ENCODE measurements at regions of chr14 and their contacts with region 1.

Region 1: GRCh38 chr14:76647697-76648298 is 113.5 kb upstream of the VASH1 start:
- DNase-seq: peak in 1 of 2 donors; percentile 15
- ATAC-seq: peak in 1 of 2 donors; percentile 86
- H3K4me3 ChIP-seq: no peak overlapping the region
- H3K27ac ChIP-seq: no peak overlapping the region
- H3K4me1 ChIP-seq: no peaks in the 10 kb centered on the region
- H3K27me3 ChIP-seq: no peaks in the 10 kb centered on the region
- CTCF ChIP-seq: peak; percentile 46 to 78 (median 46)
- POLR2A ChIP-seq: no peak

Region 2: DNA sequence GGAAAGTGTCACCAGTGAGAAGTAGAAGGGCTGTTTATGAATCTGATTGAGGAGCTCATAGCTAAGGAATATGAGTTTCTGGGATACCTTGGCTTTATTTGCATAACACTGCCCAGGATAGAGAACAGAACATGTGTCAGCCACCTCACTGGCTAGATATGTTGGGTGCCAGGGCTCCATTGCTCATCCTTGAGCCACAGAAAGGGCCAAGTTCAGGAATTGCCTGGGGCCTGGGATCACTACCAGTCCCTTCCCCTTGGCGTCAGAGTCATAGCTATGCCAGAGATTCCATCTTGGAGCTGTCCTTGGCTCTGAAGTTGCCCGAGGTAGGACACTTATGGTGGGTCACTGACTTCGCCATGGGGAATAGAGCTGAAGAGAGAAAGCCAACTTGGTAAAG is 613.2 kb before region 1 on chr14:
- in situ Hi-C with region 1: loop called in 2 of 4 experiments (anchors 25 kb)
- intact Hi-C with region 1: no loop called
- DNase-seq: no peak
- ATAC-seq: no peak
- H3K4me3 ChIP-seq: no peak overlapping the region
- H3K27ac ChIP-seq: no peak overlapping the region
- H3K4me1 ChIP-seq: no peaks in the 10 kb centered on the region
- H3K27me3 ChIP-seq: no peaks in the 10 kb centered on the region
- CTCF ChIP-seq: no peak
- POLR2A ChIP-seq: no peak

Region 3: DNA sequence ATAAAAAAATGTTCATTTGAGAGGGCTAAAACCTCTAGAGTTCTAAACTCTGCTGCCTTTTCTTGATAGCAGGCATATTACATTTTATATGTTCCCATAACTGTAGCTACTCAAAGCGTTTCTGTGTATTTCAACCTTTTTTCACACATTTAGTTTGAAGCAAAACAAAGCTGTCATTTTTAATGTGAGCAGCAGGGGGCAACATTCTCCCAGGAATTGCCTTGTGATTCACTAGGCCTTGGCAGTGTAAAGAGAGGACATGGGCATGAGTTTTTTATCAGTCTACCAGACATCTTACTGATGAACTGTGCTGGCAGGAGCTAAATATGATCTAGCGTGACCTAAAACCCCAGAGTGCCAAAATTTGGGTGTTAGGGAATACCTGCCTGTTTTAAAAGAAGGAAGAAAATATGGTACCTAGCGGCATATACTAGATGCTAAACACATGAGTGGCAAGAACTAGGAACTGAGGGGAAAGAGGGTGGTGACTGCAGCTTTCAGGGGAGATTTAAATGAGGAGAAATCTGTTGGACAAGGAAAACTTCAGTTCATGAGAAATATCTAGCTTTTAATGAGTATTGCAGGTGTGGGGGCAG is 596.9 kb before region 1 on chr14:
- in situ Hi-C with region 1: loop called (anchors 25 kb)
- intact Hi-C with region 1: loop called (anchors 2 kb)
- DNase-seq: peak; percentile 11 to 29
- ATAC-seq: peak; percentile 75 to 84
- H3K4me3 ChIP-seq: no peak overlapping the region
- H3K27ac ChIP-seq: no peak overlapping the region
- H3K4me1 ChIP-seq: no peaks in the 10 kb centered on the region
- H3K27me3 ChIP-seq: no peaks in the 10 kb centered on the region
- CTCF ChIP-seq: peak; percentile 75 to 86 (median 80)
- POLR2A ChIP-seq: no peak

Region 4: DNA sequence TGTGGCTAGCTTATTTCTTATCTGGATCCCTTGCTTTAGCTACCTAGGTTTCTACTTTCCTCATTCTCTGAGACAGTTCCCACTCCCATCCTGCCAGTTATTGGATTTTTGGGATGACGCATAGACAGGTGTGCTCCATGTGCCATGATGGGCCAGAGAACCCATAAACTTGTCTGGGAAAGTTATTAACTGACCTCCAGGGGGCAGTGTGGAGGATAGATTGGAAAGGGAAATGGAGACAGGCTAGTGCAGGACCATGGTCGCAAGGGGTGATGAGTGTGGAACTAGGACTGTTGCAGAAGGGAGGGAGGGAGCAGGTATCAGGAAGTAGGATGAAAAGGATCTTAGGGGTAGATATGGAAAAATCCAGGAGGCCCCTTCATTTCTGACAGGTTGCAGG is 191.6 kb before region 1 on chr14:
- in situ Hi-C with region 1: loop called in 2 of 4 experiments (anchors 10 kb)
- intact Hi-C with region 1: loop called (anchors 5 kb)
- DNase-seq: no peak
- ATAC-seq: peak; percentile 51 to 62
- H3K4me3 ChIP-seq: no peak overlapping the region
- H3K27ac ChIP-seq: no peak overlapping the region
- H3K4me1 ChIP-seq: no peaks in the 10 kb centered on the region
- H3K27me3 ChIP-seq: no peaks in the 10 kb centered on the region
- CTCF ChIP-seq: peak in 4 of 5 experiments; percentile 46 to 59 (median 56)
- POLR2A ChIP-seq: no peak

Region 5: DNA sequence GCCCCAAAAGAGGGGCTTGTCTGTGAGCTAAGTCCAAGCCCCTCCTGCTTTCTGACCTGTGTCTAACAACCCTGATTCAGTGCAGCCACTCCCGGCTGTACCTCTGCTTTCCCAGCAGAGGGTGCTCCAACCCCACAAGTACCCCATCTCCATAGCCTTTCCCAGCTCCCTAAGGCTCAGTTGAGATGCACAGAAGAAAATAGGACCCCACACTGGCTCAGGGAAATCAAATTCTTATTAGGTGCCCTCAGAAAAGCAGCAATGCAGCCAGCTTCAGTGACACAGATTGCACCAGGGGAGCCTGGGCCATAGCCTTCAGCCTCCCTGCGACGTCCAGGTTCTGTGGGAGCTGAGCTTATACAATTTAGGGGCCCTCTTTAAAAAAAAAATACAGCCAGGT is 228.3 kb after region 1 on chr14:
- in situ Hi-C with region 1: no loop called
- intact Hi-C with region 1: no loop called
- DNase-seq: peak; percentile 31 to 51
- ATAC-seq: peak; percentile 84 to 87
- H3K4me3 ChIP-seq: no peak overlapping the region
- H3K27ac ChIP-seq: no peak overlapping the region
- H3K4me1 ChIP-seq: no peaks in the 10 kb centered on the region
- H3K27me3 ChIP-seq: no peaks in the 10 kb centered on the region
- CTCF ChIP-seq: peak; percentile 86 to 95 (median 90)
- POLR2A ChIP-seq: no peak